H1 (cell line): ENCODE measurements at regions of chr5 and their contacts with region 1.

Region 1: GRCh38 chr5:76479973-76480667 is 77.0 kb downstream of the IQGAP2 start:
- DNase-seq: no peak
- H3K4me3 ChIP-seq: no peak overlapping the region
- H3K27ac ChIP-seq: no peak overlapping the region
- H3K4me1 ChIP-seq: peaks cover 4 to 28% (median 22%) of the 10 kb centered on the region in 4 experiments; a peak in 6 of 7 replicates
- H3K27me3 ChIP-seq: no peaks in the 10 kb centered on the region
- CTCF ChIP-seq: no peak
- EP300 ChIP-seq: no peak
- POLR2A ChIP-seq: no peak
- RAD21 ChIP-seq: no peak

Region 2: DNA sequence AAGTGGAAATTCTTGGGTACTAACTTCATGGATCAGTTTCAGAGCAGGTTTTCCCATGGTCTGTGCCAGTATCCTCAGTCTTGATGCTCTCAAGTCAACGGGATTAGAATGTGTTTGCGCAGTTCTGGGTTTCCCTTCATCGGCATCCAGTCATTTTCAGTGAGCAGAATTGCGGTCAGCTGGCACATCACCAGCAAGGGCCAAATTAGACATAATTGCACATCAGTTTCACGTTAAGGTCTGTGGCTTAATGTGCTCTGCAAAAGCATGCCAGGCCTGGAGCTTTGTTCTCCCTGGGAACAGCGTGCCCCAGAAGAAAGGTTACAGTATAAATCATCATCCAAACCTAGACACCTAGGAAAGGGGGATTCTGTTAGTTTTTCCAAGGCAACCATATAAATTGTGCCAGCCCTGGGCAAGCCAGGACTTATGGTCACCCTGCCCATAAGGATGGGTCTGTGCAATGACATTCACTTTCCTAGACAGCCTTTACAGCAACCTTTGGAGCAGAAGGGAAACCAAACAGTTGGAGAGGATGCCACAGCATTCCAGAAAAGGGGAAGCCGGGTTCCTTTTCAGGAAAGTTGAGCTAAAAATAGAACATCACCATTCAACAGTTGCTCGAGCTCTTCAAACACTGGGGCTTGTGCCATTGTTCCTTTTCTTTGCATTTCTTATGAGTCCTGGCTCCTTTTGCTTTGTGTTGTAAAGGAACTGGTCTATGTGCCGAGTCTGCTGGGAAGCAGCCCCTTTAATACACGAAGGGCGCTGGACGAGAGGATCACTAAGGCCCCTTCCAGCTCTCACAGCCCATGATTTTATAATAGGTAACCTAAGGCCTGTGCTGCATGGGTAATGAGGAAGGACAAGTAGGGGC is 54.0 kb before region 1 on chr5:
- CTCF ChIA-PET with region 1: interaction called, 10 read pairs
- POLR2A ChIA-PET with region 1: interaction called, 10 read pairs
- DNase-seq: peak in 1 of 2 experiments; percentile 55
- H3K4me3 ChIP-seq: peak overlapping the region in 2 of 4 experiments; percentile 5 to 45; a peak in 3 of 8 replicates
- H3K27ac ChIP-seq: peak overlapping the region; percentile 67
- H3K4me1 ChIP-seq: peaks cover 20 to 32% (median 30%) of the 10 kb centered on the region in 4 experiments
- H3K27me3 ChIP-seq: no peaks in the 10 kb centered on the region
- CTCF ChIP-seq: no peak
- EP300 ChIP-seq: no peak
- POLR2A ChIP-seq: no peak; a peak in 1 of 3 replicates
- RAD21 ChIP-seq: no peak

Region 3: DNA sequence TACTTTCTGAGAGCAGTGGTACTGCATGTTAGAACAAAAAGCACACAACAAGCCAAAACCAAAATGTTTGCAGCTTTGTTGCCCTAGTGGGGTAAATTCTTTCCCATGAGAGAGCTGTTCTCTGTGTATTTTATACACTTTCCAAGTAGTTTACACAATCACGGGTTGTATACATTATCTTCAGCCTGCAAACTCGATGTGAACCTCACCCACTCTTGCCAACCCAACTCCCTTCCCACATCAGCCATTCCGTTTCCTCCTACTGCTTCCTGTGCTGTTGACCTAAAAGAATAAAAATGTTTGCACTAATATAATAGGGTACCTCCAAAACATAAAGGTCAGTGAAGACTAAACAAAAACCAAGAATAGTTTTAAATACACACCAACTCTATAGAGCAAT is 30.1 kb before region 1 on chr5:
- CTCF ChIA-PET with region 1: interaction called, 11 read pairs
- POLR2A ChIA-PET with region 1: no interaction called
- DNase-seq: no peak
- H3K4me3 ChIP-seq: no peak overlapping the region
- H3K27ac ChIP-seq: no peak overlapping the region
- H3K4me1 ChIP-seq: peaks cover 0 to 2% (median 0%) of the 10 kb centered on the region in 4 experiments; a peak in 2 of 7 replicates
- H3K27me3 ChIP-seq: no peaks in the 10 kb centered on the region
- CTCF ChIP-seq: no peak
- EP300 ChIP-seq: no peak
- POLR2A ChIP-seq: no peak
- RAD21 ChIP-seq: no peak

Region 4: GRCh38 chr5:76457674-76458485 is 22.2 kb before region 1 on chr5:
- CTCF ChIA-PET with region 1: interaction called, 11 read pairs
- POLR2A ChIA-PET with region 1: no interaction called
- DNase-seq: no peak
- H3K4me3 ChIP-seq: no peak overlapping the region
- H3K27ac ChIP-seq: no peak overlapping the region
- H3K4me1 ChIP-seq: no peaks in the 10 kb centered on the region; a peak in 1 of 7 replicates
- H3K27me3 ChIP-seq: no peaks in the 10 kb centered on the region
- CTCF ChIP-seq: no peak
- EP300 ChIP-seq: no peak
- POLR2A ChIP-seq: no peak
- RAD21 ChIP-seq: no peak

Region 5: DNA sequence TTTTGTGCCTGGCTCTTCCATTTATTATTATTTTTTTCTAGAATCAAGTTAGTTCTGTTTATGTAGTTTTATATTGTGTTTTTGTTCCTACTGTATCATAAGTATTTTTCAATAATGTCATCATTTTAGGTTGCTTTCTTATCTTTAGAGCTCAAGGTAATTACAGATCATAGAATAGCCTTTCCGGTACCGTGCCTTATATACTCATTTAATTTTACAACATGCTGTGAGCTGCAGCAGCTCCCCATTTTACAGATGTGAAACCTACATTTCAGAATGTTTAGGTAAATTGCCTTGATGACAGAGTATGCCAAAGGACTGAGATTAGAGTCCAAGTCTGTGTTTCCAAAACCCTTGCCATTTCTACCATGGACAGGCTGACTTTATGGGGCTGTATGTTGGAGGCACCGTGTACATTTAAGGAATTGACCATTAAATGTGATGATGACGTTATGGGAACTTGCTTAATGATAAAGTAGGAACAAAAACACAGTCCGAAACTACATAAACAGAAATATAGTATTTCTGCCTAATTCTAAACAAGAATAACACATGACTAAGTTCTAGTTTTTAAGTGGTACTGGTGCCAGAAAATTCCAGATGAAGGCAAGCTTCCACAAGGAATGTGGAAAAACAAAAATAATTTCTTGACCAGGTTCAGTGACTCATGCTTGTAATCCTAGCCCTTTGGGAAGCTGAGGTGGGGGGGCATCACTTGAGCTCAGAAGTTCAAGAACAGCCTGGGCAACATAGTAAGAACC is 20.7 kb after region 1 on chr5:
- CTCF ChIA-PET with region 1: interaction called, 26 read pairs
- POLR2A ChIA-PET with region 1: no interaction called
- DNase-seq: no peak
- H3K4me3 ChIP-seq: no peak overlapping the region
- H3K27ac ChIP-seq: no peak overlapping the region
- H3K4me1 ChIP-seq: peaks cover 7 to 31% (median 26%) of the 10 kb centered on the region in 4 experiments; a peak in 6 of 7 replicates
- H3K27me3 ChIP-seq: no peaks in the 10 kb centered on the region
- CTCF ChIP-seq: no peak
- EP300 ChIP-seq: no peak
- POLR2A ChIP-seq: no peak
- RAD21 ChIP-seq: no peak

Region 6: DNA sequence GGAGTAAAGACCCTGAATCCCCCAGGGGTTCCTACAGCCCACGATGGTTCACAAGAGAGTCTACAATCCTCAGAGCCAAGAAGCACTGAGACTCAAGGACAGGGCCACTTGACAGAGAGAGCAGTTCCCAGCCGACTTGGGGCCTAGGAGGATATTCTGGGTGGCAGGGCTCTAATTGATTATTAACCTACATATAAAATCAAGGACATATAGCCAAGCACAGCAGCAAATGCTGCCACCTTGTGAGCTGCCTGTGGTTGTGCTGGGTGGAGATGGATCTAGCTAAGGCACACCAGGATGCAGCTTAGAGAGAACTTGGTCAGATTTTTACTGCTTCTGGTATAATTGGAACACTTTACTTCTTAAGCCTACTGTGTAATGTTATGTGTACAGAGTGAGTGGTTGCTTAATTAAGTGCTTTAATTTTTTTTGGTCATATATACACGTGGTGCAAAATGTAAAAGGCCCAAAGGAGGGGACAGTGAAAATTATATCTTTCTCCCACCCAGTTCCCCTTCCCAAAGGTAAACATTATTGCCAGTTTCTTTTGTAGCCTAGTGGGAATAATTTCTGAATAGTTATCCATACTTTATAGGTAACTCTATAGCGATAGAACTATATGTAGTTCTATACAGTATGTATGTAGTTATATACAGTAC is 64.3 kb after region 1 on chr5:
- CTCF ChIA-PET with region 1: interaction called, 11 read pairs
- POLR2A ChIA-PET with region 1: no interaction called
- DNase-seq: no peak
- H3K4me3 ChIP-seq: no peak overlapping the region
- H3K27ac ChIP-seq: no peak overlapping the region
- H3K4me1 ChIP-seq: peaks cover 0 to 12% (median 1%) of the 10 kb centered on the region in 4 experiments; a peak in 3 of 7 replicates
- H3K27me3 ChIP-seq: no peaks in the 10 kb centered on the region
- CTCF ChIP-seq: peak; percentile 82 to 84 (median 84)
- EP300 ChIP-seq: no peak
- POLR2A ChIP-seq: no peak
- RAD21 ChIP-seq: peak; percentile 95 to 96